ENCODE measurements at regions of chr20 and their contacts with region 1.

Region 1: DNA sequence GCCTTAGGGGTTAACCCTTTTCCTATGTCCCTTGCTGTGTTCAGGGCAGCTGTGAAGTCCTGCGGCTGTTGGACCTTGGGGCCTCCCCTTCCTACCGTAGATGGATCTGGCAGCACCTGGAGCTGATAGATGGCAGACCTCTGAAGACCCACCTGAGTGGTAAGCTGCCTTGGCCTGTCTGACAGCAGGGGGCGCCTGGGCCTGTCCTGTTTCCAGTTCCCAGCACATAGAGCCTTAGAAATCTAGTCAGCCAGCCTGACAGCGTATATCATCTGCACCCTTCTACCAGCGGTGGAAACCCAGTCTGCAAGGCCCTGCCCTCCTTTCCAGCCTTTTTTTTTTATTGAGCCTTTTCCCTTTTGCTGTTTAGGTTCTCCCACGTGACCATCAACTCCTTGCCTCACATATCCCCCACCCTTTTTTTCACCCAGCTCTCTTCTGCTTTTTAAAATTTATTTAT is 26.6 kb downstream of the CNBD2 start:
- DNase-seq: peak; percentile 46 to 65
- ATAC-seq: peak; percentile 82 to 94
- H3K4me3 ChIP-seq: no peak overlapping the region
- H3K27ac ChIP-seq: no peak overlapping the region
- H3K4me1 ChIP-seq: peaks cover 6 to 10% of the 10 kb centered on the region in 2 donors
- H3K27me3 ChIP-seq: no peaks in the 10 kb centered on the region
- CTCF ChIP-seq: peak; percentile 76 to 87 (median 83)
- POLR2A ChIP-seq: no peak

Region 2: GRCh38 chr20:36132802-36133211 is 137.8 kb after region 1 on chr20:
- in situ Hi-C with region 1: loop called in 3 of 4 experiments (anchors 5 kb)
- intact Hi-C with region 1: loop called (anchors 1 kb)
- DNase-seq: no peak
- ATAC-seq: no peak
- H3K4me3 ChIP-seq: no peak overlapping the region
- H3K27ac ChIP-seq: no peak overlapping the region
- H3K4me1 ChIP-seq: no peaks in the 10 kb centered on the region
- H3K27me3 ChIP-seq: no peaks in the 10 kb centered on the region
- CTCF ChIP-seq: no peak
- POLR2A ChIP-seq: no peak

Region 3: GRCh38 chr20:36439040-36439730 is 444.2 kb after region 1 on chr20:
- in situ Hi-C with region 1: loop called in 1 of 4 experiments (anchors 25 kb)
- intact Hi-C with region 1: loop called (anchors 2 kb)
- DNase-seq: peak in 1 of 2 donors; percentile 57
- ATAC-seq: peak; percentile 61 to 70
- H3K4me3 ChIP-seq: no peak overlapping the region
- H3K27ac ChIP-seq: no peak overlapping the region
- H3K4me1 ChIP-seq: no peaks in the 10 kb centered on the region
- H3K27me3 ChIP-seq: peaks cover 0 to 8% (median 0%) of the 10 kb centered on the region in 3 donors
- CTCF ChIP-seq: peak; percentile 76 to 90 (median 87)
- POLR2A ChIP-seq: no peak